ENCODE measurements at regions of chr3 and their contacts with region 1.

Region 1: DNA sequence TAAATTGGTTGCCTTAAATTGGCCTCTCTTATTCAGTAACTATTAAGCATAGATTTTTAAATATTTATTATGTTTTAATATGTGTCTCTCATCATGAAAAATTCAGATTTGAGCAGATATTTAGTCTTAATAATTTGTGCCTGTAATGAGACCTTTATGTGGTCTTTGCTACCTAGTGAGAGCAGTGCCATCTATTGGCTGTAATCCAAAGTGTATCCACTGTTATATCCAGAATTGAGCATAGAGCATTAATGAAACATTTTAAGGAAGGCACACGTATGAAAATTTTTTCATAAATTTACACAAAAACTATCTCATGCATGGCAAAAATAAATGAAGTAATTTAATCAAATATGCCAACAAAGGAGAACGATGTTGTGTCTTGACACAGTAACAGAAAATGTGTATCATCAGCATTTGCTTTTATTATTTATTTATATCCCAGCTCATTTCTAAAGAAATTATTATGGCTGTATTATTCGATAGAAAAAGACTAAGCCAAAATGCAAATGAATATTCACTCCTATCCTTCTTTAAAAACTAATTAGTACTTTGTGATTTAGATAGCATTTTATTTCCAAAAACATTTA is 203.5 kb downstream of the RSRC1 start:
- DNase-seq: no peak
- H3K4me3 Mint-ChIP-seq: no peak overlapping the region
- H3K27ac Mint-ChIP-seq: no peak overlapping the region
- H3K4me1 Mint-ChIP-seq: no peaks in the 10 kb centered on the region
- H3K27me3 Mint-ChIP-seq: no peaks in the 10 kb centered on the region

Region 2: DNA sequence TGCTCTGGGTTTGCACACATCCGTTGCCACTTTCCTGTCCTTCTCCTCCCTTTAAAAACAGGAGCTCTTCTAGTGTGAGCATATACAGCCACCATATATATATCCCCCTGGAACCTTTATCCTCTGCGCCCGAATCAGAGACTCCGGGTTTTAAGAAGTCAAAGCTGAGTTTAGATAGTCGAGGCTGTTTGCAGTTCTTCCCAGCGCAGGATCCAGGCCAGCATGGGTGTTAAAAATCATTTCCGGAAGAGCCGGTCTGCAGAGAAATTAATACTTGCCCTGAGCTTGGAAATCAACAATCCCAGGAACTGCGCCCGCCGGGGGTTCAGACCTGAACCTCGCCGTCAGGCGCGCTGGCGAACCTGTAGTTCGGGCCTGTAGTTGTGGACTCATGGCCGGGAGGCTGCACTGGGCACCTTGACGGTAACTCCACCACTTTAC is 209.5 kb before region 1 on chr3:
- CTCF ChIA-PET with region 1: interaction called, 4 read pairs
- POLR2A ChIA-PET with region 1: no interaction called
- intact Hi-C with region 1: loop called (anchors 1 kb)
- DNase-seq: peak; percentile 9
- H3K4me3 Mint-ChIP-seq: peak overlapping the region; percentile 25
- H3K27ac Mint-ChIP-seq: peak overlapping the region; percentile 15
- H3K4me1 Mint-ChIP-seq: peaks cover 41% of the 10 kb centered on the region
- H3K27me3 Mint-ChIP-seq: peaks cover 81% of the 10 kb centered on the region

Measured in activated CD4-positive, alpha-beta memory T cell treated with anti-CD3 and anti-CD28 coated beads for 36 hours (primary cell).